ENCODE measurements at regions of chr4 and their contacts with region 1.

Region 1: GRCh38 chr4:147096667-147097604 is 151.3 kb upstream of the TTC29 start:
- DNase-seq: no peak
- H3K4me3 ChIP-seq: no peak overlapping the region
- CTCF ChIP-seq: peak; percentile 32

Region 2: GRCh38 chr4:146342600-146343192 is 754.2 kb before region 1 on chr4:
- CTCF ChIA-PET with region 1: interaction called, 23 read pairs
- POLR2A ChIA-PET with region 1: no interaction called
- DNase-seq: no peak
- H3K4me3 ChIP-seq: no peak overlapping the region
- CTCF ChIP-seq: peak; percentile 25

Region 3: DNA sequence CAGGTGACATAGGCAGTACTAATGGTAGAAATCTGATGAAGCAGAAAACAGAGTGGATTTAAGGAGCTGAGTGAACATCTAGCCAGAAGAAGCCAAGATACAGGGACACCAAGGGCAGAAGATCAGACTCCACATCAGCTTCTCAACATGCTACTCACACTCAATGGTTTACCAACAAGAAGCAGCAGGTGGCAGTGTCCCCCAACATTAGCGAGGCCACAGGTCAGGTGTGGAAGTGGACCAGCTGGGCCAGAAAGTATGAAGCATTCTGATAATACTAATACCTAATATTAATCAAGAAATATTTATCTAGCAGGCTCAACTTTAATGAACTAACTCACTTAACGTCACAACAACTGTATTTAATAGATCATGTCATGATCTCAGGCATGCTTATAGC is 77.9 kb before region 1 on chr4:
- CTCF ChIA-PET with region 1: interaction called, 341 read pairs
- POLR2A ChIA-PET with region 1: no interaction called
- DNase-seq: no peak
- H3K4me3 ChIP-seq: no peak overlapping the region
- CTCF ChIP-seq: peak; percentile 71

Region 4: DNA sequence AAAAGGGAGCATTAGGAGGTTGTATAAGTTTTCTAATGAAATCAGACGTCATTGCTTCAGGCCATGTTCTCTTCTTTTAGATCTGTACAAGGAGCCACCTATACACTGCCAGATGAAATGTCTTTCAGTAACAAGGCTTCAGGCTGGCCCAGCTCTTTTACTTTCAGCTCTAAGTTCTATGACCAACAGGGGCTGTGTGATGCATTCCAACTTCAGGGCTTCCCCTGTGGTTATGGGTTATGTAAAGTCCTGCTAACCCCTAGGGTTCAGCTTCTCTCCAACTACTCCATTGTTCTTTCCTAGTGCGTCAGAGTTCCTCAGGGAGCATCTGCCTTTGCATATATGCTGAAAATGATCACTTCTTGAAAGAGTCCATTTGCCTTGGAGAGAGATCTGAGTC is 71.9 kb before region 1 on chr4:
- CTCF ChIA-PET with region 1: interaction called, 341 read pairs
- POLR2A ChIA-PET with region 1: no interaction called
- DNase-seq: no peak
- H3K4me3 ChIP-seq: no peak overlapping the region
- CTCF ChIP-seq: no peak

Region 5: DNA sequence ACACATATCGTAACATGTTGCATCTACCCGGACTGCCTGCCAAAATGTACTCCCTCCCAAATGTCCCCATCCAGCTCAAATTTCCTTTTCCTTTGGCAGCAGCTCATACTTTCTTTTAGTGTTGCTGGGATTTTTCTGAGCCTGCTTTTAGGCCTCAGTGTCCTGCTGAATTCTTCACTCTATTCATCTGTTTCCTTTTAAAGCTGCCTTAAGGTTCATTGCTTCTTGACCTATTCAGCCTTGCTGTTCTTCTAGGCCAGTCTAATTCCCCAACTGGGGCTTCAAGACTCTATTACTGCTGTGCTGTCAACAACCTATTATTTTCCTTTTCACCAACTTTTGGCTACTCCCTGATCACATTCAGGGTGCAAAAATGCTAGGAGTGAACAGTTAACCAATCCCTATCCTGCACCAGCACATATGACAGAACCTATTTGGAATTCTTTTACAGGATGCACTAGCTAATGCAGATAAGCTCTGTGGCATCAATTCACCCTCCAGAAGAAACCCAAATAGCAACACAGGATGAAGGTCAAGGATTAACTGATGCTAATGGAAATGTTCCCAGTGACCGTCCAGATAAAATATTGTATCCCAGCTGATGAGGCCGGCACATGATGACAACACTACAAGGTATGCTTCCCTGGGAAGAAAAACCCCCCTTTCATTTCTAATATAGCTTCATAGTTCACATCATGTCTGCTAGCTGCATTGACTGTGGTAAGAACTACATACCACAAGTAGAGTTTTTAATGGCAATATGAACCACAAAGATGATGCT is 36.6 kb before region 1 on chr4:
- CTCF ChIA-PET with region 1: interaction called, 10 read pairs
- POLR2A ChIA-PET with region 1: interaction called, 3 read pairs
- DNase-seq: peak; percentile 73
- H3K4me3 ChIP-seq: no peak overlapping the region
- CTCF ChIP-seq: no peak

Region 6: DNA sequence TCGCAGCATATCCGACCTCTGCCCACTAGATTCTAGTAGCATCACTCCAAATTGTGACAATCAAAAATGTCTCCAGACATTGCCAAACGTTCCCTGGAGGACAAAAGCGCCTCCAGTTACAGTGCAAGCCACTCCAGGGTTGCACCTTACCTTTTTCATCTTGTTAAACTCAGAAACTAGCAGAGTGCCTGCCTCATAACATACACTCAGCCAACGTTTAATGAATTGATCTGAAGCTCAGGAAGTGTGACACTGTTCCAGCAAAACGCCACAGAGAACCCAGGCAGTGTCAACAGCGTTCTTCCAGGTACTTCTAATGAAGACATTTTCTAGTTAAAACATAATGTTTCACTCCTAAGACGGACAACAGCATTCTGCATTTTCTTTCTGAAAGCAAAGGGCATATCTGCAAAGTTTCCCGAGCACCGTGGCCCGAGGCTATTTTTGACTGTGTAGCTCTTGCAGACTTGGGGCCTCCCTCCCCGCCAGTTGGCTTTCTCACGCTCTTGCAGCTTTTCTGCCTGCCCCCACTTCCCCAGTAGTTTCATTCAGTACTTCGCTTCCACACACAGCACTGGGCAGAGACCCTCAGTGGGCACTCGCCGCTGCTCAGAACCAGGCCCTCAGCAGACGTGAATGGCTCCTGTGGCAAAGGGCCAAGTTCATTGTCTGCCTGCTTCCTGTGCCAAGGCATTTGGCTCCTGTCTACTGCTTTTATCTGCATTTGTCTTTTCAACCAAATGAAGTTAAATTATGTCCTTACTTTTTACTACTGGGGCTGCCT is 17.9 kb before region 1 on chr4:
- CTCF ChIA-PET with region 1: interaction called, 18 read pairs
- POLR2A ChIA-PET with region 1: no interaction called
- DNase-seq: no peak
- H3K4me3 ChIP-seq: no peak overlapping the region
- CTCF ChIP-seq: no peak

Region 7: GRCh38 chr4:147111033-147111367 is 14.1 kb after region 1 on chr4:
- CTCF ChIA-PET with region 1: interaction called, 16 read pairs
- POLR2A ChIA-PET with region 1: no interaction called
- DNase-seq: no peak
- H3K4me3 ChIP-seq: no peak overlapping the region
- CTCF ChIP-seq: no peak